ENCODE measurements at regions of chr18 and their contacts with region 1.

Region 1: GRCh38 chr18:79246348-79247108 is 149.2 kb upstream of the NFATC1 start:
- DNase-seq: peak; percentile 58 to 73
- ATAC-seq: peak; percentile 96 to 100 (median 98)
- H3K4me3 ChIP-seq: peak overlapping the region in 2 of 10 donors; percentile 6 to 25
- H3K27ac ChIP-seq: no peak overlapping the region
- H3K4me1 ChIP-seq: peaks cover 0 to 7% (median 0%) of the 10 kb centered on the region in 9 donors
- H3K27me3 ChIP-seq: no peaks in the 10 kb centered on the region
- CTCF ChIP-seq: peak; percentile 87 to 99 (median 96)

Region 2: GRCh38 chr18:77899972-77900754 is 1346.4 kb before region 1 on chr18:
- intact Hi-C with region 1: loop called in 2 of 10 experiments (anchors 10 kb)
- DNase-seq: peak in 1 of 2 donors; percentile 34
- ATAC-seq: peak in 7 of 8 donors; percentile 48 to 96 (median 79)
- H3K4me3 ChIP-seq: peak overlapping the region in 9 of 10 donors; percentile 18 to 48 (median 38)
- H3K27ac ChIP-seq: no peak overlapping the region
- H3K4me1 ChIP-seq: peaks cover 0 to 9% (median 5%) of the 10 kb centered on the region in 9 donors
- H3K27me3 ChIP-seq: peaks cover 0 to 43% (median 30%) of the 10 kb centered on the region in 7 donors
- CTCF ChIP-seq: peak; percentile 57 to 80 (median 67)

Region 3: DNA sequence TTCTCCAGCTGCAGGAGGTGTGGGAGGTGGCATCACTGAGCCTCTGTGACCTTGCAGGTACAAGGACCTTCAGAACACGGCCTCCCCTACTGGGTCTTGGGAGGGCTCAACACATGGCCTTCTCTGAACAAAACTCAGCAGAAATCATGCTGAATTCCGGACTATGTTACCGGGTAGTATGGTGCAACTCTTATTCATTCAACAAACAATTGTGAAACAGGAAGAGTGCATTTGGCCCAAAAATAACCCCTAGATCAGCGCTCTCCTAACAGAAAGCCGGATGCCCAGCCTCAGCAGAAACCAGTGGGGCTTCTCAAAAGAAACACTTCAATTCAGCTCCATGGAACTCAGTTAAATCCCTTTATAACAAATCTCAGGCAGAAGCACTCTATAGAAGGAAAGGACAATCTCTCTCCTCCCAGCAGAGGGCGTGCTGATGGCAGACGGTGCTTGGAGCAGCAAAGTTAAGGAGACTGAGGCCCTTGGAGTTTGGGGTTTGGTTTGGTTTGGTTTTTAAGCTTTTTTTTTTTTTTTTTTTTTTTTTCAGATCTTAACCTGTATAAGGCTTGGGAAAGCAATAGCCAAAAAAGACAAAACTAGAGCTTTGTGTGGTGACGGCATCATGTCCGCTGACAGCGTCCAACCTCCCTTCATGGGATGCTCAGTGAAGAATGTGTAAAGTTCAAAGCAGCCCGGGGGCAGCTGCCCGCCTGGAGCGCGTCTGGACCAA is 371.1 kb before region 1 on chr18:
- intact Hi-C with region 1: loop called in 6 of 10 experiments (anchors 5 to 10 kb)
- DNase-seq: no peak
- ATAC-seq: peak in 1 of 8 donors; percentile 52
- H3K4me3 ChIP-seq: no peak overlapping the region
- H3K27ac ChIP-seq: no peak overlapping the region
- H3K4me1 ChIP-seq: peaks cover 0 to 5% (median 0%) of the 10 kb centered on the region in 9 donors
- H3K27me3 ChIP-seq: peaks cover 0 to 58% (median 22%) of the 10 kb centered on the region in 7 donors
- CTCF ChIP-seq: peak; percentile 7 to 62 (median 47)

Region 4: GRCh38 chr18:78984941-78985784 is 261.4 kb before region 1 on chr18:
- intact Hi-C with region 1: loop called in 3 of 10 experiments (anchors 5 to 10 kb)
- DNase-seq: no peak
- ATAC-seq: peak in 2 of 8 donors; percentile 9 to 20
- H3K4me3 ChIP-seq: no peak overlapping the region
- H3K27ac ChIP-seq: no peak overlapping the region
- H3K4me1 ChIP-seq: peaks cover 0 to 16% (median 10%) of the 10 kb centered on the region in 9 donors
- H3K27me3 ChIP-seq: peaks cover 35 to 100% (median 96%) of the 10 kb centered on the region in 7 donors
- CTCF ChIP-seq: peak in 3 of 9 donors; percentile 4 to 13 (median 9)

Region 5: GRCh38 chr18:79068937-79069791 is 177.4 kb before region 1 on chr18 and contains the start of gene ATP9B:
- intact Hi-C with region 1: loop called in 3 of 10 experiments (anchors 10 kb)
- DNase-seq: peak; percentile 97 to 98
- ATAC-seq: peak; percentile 95 to 99 (median 98)
- H3K4me3 ChIP-seq: peak within 1 kb of the TSS; percentile 83 to 100 (median 96)
- H3K27ac ChIP-seq: peak within 1 kb of the TSS; percentile 83 to 98 (median 92)
- H3K4me1 ChIP-seq: peaks cover 5 to 29% (median 18%) of the 10 kb centered on the region in 9 donors
- H3K27me3 ChIP-seq: no peaks in the 10 kb centered on the region
- CTCF ChIP-seq: peak in 6 of 9 donors; percentile 5 to 44 (median 27)
- total RNA-seq, gene ATP9B: 10.5 to 19.7 (median 15.5) TPM